PC-3 (cell line): ENCODE measurements at regions of chr3 and their contacts with region 1.

Region 1: DNA sequence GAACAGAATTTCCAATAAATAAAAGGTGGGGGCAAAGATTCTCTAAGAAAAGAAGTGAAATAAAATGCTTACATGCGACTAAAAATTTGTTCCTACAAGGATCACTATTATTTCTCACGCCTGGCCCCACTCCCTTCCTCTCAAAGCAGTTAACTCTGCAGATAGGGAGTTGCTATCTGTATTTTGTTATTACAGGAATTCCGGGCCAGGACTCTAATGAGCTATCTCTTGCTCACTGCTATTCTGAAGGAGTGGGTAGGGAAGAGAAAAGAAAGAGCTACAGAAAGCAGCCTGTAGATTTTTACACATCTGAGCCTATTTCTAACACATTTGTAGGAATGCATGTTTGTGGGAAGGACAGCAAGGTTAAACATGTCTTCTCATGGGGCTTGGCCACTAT is 140.4 kb downstream of the PCCB start:
- DNase-seq: no peak
- ATAC-seq: no peak
- H3K4me3 ChIP-seq: no peak overlapping the region
- H3K27ac ChIP-seq: no peak overlapping the region
- H3K4me1 ChIP-seq: no peaks in the 10 kb centered on the region
- H3K27me3 ChIP-seq: no peaks in the 10 kb centered on the region
- CTCF ChIP-seq: no peak

Region 2: DNA sequence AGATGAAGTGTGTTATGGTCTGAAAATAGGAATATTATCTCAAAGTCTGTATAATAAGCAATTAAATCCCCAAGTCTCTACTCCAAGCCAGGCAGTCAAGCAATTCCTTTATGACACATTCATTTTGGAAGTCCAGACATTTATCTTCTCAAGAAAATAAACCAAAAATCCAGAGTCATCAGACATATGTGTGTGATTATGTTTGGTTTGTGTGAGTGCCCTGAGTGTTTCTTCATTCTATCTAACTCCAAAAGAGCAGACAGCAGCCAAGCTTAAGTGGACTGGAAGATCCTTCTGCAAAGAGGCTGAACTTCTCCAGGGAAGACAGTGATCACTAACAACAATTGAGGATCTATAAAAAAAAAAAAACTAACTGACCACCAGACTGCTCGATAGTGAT is 121.8 kb after region 1 on chr3:
- CTCF ChIA-PET with region 1: no interaction called
- POLR2A ChIA-PET with region 1: no interaction called
- intact Hi-C with region 1: loop called (anchors 1 kb)
- DNase-seq: no peak
- ATAC-seq: no peak
- H3K4me3 ChIP-seq: no peak overlapping the region
- H3K27ac ChIP-seq: no peak overlapping the region
- H3K4me1 ChIP-seq: no peaks in the 10 kb centered on the region
- H3K27me3 ChIP-seq: no peaks in the 10 kb centered on the region
- CTCF ChIP-seq: no peak